ENCODE measurements at regions of chr22 and their contacts with region 1.

Region 1: DNA sequence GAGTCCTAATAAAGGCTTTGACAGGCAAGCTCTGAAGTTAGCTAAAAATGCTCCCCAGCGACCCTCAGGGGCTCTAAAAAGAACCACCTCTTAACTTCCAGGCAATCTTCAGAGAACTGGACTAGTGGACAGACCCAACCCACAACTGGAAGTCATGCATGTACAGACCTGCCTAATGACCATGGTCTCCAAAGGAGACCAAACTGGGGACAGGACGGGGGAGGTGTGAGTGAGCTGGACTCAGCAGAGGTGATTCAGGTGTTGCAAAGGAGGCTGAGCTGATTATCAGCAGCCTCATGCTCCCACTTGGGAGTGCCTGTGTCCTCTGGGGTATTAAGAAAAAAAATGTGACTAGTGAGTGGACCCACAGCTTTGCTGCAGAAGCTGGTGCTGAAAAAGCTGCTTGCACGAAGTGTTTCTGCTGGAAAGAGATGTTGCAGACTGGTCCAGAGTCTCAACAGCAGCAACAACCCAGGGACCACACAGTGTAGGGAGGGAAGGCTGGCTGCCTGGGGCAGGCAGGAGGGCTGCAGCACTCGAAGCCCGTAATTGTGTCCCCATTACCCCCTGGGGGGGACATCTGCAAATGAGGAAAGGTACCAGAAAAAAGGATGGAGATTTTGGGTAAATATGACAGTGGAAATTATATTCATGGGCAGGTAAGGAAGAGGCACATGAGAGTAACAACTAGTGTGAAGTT is 35.3 kb downstream of the PITPNB start:
- DNase-seq: no peak

Region 2: DNA sequence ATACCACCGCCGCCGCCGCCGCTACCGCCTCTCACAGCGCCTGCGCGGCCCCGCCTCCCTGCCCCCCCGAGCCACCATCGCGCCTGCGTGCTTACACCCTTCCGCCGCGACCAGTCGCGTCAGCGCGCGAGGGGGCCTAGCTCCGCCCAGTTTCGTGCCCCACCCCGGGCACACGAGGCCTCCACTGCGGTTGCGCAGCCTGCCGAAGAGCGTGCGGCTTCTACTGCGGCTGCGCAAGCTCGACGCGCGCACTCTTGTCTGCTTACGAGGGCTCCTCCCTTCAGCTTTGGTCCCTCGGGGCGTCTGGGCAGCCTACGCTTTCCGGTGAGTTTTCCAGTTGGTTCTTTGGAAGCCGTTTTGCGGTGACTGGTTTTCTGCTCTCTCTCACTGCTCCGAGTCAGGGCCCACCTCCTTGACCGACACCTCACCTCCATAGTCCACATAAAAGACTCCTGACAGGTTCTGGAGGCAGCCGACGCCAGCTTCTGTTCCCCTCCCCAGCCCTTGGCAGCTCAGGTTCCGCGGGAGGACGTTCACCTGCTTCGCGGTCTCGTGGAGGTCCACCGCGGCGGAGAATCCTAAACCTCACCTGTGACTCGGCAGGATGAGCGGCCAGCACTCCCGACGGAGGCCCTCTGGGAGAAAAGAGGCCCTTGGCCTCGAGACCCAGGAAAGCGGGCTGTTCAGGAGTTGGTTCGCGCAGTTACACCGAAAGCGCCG is 35.6 kb after region 1 on chr22 and contains the start of gene PITPNB:
- intact Hi-C with region 1: loop called (anchors 2 kb)
- DNase-seq: peak; percentile 98
- total RNA-seq, gene PITPNB: 69.2 TPM

Region 3: DNA sequence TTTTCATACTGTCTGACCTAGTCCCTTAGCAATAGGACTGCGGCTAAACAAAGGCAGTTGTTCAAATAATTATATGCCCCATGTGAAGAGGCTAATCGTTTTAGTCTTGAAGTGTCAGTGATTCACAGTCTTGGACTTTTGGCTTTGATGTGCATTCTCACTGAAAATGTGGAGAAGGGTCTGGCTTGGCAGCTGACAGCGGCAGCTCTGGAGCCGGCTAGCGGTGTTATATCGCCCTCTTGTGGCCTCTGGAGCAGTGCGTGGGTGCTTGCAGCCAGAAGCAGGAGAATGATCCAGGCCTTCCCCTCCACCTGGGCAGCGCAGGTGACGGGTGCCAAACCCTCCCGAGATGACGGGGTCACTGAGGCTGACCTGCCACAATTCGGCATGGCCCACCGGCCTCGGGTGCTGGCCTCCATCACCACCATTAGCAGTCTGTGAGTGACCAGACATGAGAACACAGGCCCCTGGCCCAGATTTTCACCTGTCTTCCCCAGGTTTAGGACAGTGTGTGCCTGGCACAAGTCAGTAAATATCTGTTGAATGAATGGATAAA is 125.5 kb after region 1 on chr22:
- intact Hi-C with region 1: loop called (anchors 1 kb)
- DNase-seq: peak; percentile 83

Measured in cardiac septum (tissue), 1 donor.